Endothelial cell of umbilical vein (primary cell): ENCODE measurements at regions of chr5 and their contacts with region 1.

Region 1: GRCh38 chr5:109788596-109788995 is 98.9 kb downstream of the MAN2A1 start:
- DNase-seq: no peak
- H3K4me3 ChIP-seq: no peak overlapping the region
- H3K27ac ChIP-seq: no peak overlapping the region
- H3K4me1 ChIP-seq: no peaks in the 10 kb centered on the region
- H3K27me3 ChIP-seq: no peaks in the 10 kb centered on the region
- CTCF ChIP-seq: no peak
- POLR2A ChIP-seq: no peak

Region 2: DNA sequence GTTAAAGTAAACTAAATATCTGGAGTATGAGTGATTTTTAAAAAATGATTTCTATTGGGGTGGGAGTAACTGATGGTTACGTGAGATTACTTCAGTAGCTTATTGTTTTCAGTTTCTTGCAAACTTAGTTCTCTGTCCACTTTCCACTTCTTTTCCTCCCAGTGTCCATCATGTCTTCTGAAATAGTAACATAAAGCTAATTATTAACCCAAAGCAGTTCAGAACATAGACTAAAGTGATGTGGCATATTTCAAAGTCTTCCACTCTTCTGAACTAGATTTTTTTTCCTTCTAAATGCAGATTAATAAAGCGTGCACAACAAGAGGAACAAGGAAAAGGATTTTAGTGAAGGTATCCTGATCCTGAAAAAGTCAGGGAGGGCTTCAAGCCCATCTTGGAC is 15.3 kb after region 1 on chr5:
- CTCF ChIA-PET with region 1: interaction called, 7 read pairs
- POLR2A ChIA-PET with region 1: no interaction called
- dilution Hi-C with region 1: no loop called
- intact Hi-C with region 1: loop called (anchors 2 kb)
- DNase-seq: no peak
- H3K4me3 ChIP-seq: no peak overlapping the region
- H3K27ac ChIP-seq: no peak overlapping the region
- H3K4me1 ChIP-seq: no peaks in the 10 kb centered on the region
- H3K27me3 ChIP-seq: no peaks in the 10 kb centered on the region
- CTCF ChIP-seq: no peak
- POLR2A ChIP-seq: no peak

Region 3: GRCh38 chr5:109876941-109877650 is 88.5 kb after region 1 on chr5:
- CTCF ChIA-PET with region 1: no interaction called
- POLR2A ChIA-PET with region 1: no interaction called
- dilution Hi-C with region 1: no loop called
- intact Hi-C with region 1: no loop called
- DNase-seq: no peak
- H3K4me3 ChIP-seq: no peak overlapping the region
- H3K27ac ChIP-seq: no peak overlapping the region
- H3K4me1 ChIP-seq: no peaks in the 10 kb centered on the region
- H3K27me3 ChIP-seq: no peaks in the 10 kb centered on the region
- CTCF ChIP-seq: no peak
- POLR2A ChIP-seq: no peak